Dorsolateral prefrontal cortex (tissue), 120 donors: ENCODE measurements at regions of chr4 and their contacts with region 1.

Region 1: GRCh38 chr4:124085561-124086180 is 626.9 kb downstream of the ANKRD50 start:
- DNase-seq: no peak
- H3K4me3 ChIP-seq: no peak overlapping the region
- H3K27ac ChIP-seq: no peak overlapping the region
- H3K27me3 ChIP-seq: no peaks in the 10 kb centered on the region
- CTCF ChIP-seq: no peak

Region 2: GRCh38 chr4:124104101-124104500 is 18.4 kb after region 1 on chr4:
- intact Hi-C with region 1: loop called in 1 of 2 experiments (anchors 1 kb)
- DNase-seq: no peak
- H3K4me3 ChIP-seq: no peak overlapping the region
- H3K27ac ChIP-seq: no peak overlapping the region
- H3K27me3 ChIP-seq: no peaks in the 10 kb centered on the region
- CTCF ChIP-seq: no peak

Region 3: DNA sequence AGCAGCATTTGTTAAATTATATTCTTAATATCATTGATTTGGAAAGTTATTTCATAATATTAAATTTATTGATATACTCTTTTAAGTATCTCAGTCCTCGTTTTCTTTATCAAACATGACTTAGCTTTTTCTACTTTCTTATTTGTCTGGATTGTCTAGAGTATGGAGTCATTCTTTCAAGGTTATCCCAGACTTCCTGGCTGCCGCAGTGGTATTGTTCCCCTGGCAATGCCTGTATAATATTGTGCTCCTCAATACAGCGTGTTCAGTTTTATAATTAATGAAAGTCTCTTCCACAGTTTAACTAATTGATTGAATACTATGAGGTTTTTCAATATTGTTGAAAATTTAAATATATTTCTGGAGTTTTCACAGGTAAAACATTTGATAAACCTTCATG is 315.9 kb after region 1 on chr4:
- intact Hi-C with region 1: no loop called
- DNase-seq: no peak
- H3K4me3 ChIP-seq: no peak overlapping the region
- H3K27ac ChIP-seq: no peak overlapping the region
- H3K27me3 ChIP-seq: peaks cover 0 to 4% (median 0%) of the 10 kb centered on the region in 45 donors
- CTCF ChIP-seq: no peak